Naive thymus-derived CD4-positive, alpha-beta T cell (primary cell): ENCODE measurements at regions of chr1 and their contacts with region 1.

Region 1: DNA sequence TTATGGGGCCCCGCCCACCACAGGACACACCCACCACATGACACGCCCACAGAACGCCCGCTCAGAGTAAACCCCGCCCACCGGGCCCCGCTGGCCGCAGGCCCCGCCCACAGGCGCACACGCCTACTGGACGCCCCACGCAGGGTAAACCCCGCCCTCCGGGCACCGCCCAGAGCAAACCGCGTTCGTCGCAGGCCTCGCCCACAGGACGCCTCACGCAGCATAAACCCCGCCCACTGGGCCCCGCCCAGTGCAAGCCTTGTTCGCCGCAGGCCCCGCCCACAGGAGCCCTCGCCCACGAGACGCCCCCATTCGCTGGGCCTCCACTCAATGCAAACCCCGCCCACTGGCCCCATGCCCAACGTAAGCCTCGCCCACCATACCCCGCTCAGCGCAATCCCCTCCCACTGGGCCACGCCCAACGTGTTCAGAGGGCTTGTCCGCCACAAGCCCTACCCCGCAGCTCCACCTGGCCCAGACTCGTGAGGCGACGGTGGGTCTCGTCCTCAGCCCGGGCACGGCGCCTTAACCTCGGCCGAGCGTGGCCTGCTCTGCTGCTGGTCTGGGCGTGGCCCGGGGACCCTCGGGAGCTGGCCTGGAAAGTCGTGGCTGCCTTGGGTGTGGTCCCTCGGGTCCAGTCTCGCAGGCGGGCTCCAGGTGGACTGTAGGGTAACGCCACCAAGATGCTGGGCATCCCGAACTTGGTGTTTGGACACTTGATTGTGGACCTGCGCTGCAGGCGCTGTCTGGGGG is 401 bp upstream of the TMEM52 start:
- DNase-seq: peak; percentile 99 to 100 (median 100)
- ATAC-seq: peak; percentile 95
- H3K4me3 ChIP-seq: peak overlapping the region; percentile 61
- H3K4me3 Mint-ChIP-seq: peak overlapping the region; percentile 52 to 79 (median 68)
- H3K27ac ChIP-seq: peak overlapping the region; percentile 58
- H3K27ac Mint-ChIP-seq: peak overlapping the region in 8 of 9 donors; percentile 51 to 89 (median 82)
- H3K4me1 ChIP-seq: peaks cover 7 to 16% of the 10 kb centered on the region in 2 donors
- H3K4me1 Mint-ChIP-seq: peaks cover 0 to 7% (median 0%) of the 10 kb centered on the region in 7 donors
- H3K27me3 ChIP-seq: no peaks in the 10 kb centered on the region
- H3K27me3 Mint-ChIP-seq: peaks cover 0 to 4% (median 0%) of the 10 kb centered on the region in 5 donors

Region 2: GRCh38 chr1:1876335-1876930 is 43.0 kb before region 1 on chr1:
- CTCF ChIA-PET with region 1: no interaction called
- POLR2A ChIA-PET with region 1: no interaction called
- intact Hi-C with region 1: no loop called
- DNase-seq: no peak
- ATAC-seq: no peak
- H3K4me3 ChIP-seq: no peak overlapping the region
- H3K4me3 Mint-ChIP-seq: peak overlapping the region in 9 of 10 donors; percentile 5 to 78 (median 53)
- H3K27ac ChIP-seq: peak overlapping the region; percentile 10
- H3K27ac Mint-ChIP-seq: peak overlapping the region; percentile 32 to 74 (median 48)
- H3K4me1 ChIP-seq: peaks cover 39 to 61% of the 10 kb centered on the region in 2 donors
- H3K4me1 Mint-ChIP-seq: peaks cover 54 to 88% (median 80%) of the 10 kb centered on the region in 7 donors
- H3K27me3 ChIP-seq: no peaks in the 10 kb centered on the region
- H3K27me3 Mint-ChIP-seq: no peaks in the 10 kb centered on the region

Region 3: DNA sequence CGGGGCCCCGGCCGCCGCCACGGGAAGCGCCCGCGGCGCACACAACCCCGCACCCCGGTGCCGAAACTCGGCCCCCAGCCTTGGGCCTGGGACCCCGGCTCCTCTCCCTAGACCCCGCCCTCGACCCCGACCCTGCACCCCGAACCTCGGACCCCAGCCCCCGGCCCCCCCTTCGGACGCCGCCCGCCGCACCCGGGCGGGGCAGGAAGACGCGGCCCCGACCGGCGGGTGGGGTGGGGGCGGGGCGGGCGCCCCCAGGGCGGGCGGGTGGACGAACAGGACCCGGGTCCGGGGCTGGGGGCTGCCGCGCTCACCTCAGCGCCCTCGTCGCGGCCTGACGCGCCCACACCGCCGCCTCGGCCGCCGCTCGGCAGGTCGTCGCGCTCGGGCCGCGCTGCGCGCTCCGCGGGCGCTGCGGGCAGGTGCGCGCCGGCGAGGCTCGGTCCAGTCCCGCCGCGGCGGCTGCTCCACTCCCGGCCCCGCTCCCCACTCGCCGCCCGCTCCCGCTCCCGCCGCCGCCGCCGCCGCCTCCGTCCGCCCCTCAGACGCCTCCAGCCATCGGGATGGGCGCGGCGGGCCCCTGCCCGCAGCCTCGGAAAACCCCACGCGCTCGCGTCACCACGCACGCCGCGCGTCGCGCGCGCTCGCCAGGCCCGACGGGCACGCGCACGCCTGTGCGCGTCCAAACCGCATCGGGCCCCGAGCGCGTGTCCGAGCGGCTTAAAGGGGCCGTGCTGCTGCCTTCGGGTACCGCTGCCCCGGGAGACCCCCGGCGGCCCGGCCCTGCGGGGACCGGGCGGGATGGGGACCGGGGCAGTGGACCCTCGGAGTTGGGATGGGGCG is 28.8 kb before region 1 on chr1 and contains the start of gene GNB1:
- CTCF ChIA-PET with region 1: no interaction called
- POLR2A ChIA-PET with region 1: no interaction called
- intact Hi-C with region 1: loop called (anchors 1 kb)
- DNase-seq: peak; percentile 80 to 96 (median 93)
- ATAC-seq: peak; percentile 88
- H3K4me3 ChIP-seq: peak within 1 kb of the TSS; percentile 64
- H3K4me3 Mint-ChIP-seq: peak within 1 kb of the TSS; percentile 83 to 100 (median 90)
- H3K27ac ChIP-seq: peak within 1 kb of the TSS; percentile 96
- H3K27ac Mint-ChIP-seq: peak within 1 kb of the TSS; percentile 89 to 98 (median 95)
- H3K4me1 ChIP-seq: peaks cover 36 to 52% of the 10 kb centered on the region in 2 donors
- H3K4me1 Mint-ChIP-seq: peaks cover 41 to 76% (median 61%) of the 10 kb centered on the region in 7 donors
- H3K27me3 ChIP-seq: no peaks in the 10 kb centered on the region
- H3K27me3 Mint-ChIP-seq: peaks cover 0 to under 1% (median 0%) of the 10 kb centered on the region in 5 donors
- total RNA-seq, gene GNB1: 170 to 358 (median 246) TPM

Region 4: GRCh38 chr1:2049718-2050427 is 130.4 kb after region 1 on chr1 and contains the start of gene PRKCZ:
- CTCF ChIA-PET with region 1: no interaction called
- POLR2A ChIA-PET with region 1: no interaction called
- intact Hi-C with region 1: loop called in 1 of 2 experiments (anchors 1 kb)
- DNase-seq: peak; percentile 76 to 96 (median 92)
- ATAC-seq: peak; percentile 99
- H3K4me3 ChIP-seq: peak within 1 kb of the TSS; percentile 73
- H3K4me3 Mint-ChIP-seq: peak within 1 kb of the TSS; percentile 64 to 89 (median 80)
- H3K27ac ChIP-seq: peak within 1 kb of the TSS; percentile 70
- H3K27ac Mint-ChIP-seq: peak within 1 kb of the TSS in 6 of 9 donors; percentile 5 to 82 (median 50)
- H3K4me1 ChIP-seq: peaks cover 7 to 14% of the 10 kb centered on the region in 2 donors
- H3K4me1 Mint-ChIP-seq: peaks cover 10 to 35% (median 22%) of the 10 kb centered on the region in 7 donors
- H3K27me3 ChIP-seq: no peaks in the 10 kb centered on the region
- H3K27me3 Mint-ChIP-seq: peaks cover 0 to 45% (median 5%) of the 10 kb centered on the region in 5 donors
- total RNA-seq, gene PRKCZ: 3.6 to 29.6 (median 24.5) TPM

Region 5: DNA sequence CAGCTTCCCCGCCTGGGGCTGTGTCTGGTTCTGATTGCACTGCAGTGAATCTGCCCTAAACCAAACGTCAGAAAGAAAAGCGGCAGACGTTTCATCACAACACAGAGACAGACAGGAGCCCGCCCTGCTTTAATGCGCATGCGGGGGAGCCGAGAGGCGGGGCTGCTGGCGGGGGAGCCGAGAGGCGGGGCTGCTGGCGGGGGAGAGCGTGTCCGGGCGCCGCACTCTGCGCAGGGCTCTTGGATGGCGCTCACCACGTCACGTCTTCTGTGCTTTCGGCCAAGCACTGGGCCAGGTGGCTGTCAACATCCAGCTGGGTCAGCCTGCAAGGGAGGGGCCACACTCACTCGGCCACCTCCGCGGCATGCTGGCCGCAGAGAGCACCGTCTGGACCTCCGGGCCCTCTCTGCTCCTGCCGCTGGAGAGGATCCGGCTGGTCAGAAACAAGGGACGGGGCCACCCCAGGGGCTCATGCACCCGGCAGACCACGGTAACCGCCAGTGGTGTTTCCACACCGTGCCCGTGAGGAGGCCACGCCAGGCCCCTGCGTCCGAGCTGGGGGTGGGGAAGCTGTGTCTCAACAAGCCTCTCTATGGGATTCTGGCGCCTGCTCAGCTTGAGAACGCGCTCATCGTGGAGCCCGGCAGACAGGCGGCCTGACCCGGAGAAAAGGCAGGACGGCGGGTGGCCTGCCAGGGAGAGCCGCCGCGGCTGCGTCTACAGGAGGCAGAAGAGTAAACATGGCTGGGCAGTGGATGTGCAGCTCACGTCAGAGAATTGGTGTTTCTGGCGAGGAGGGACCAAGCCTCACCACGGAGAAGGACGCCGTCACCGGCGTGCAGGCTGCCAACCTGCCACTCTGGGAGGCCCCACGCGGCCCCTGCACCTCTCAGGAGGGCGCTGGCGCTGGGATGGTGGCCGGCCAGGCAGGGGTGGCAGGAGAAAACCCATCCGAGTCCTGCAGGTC is 270.3 kb after region 1 on chr1:
- CTCF ChIA-PET with region 1: no interaction called
- POLR2A ChIA-PET with region 1: no interaction called
- intact Hi-C with region 1: loop called in 1 of 2 experiments (anchors 1 kb)
- DNase-seq: peak; percentile 78 to 95 (median 91)
- ATAC-seq: peak; percentile 95
- H3K4me3 ChIP-seq: peak overlapping the region; percentile 80
- H3K4me3 Mint-ChIP-seq: peak overlapping the region; percentile 66 to 86 (median 80)
- H3K27ac ChIP-seq: peak overlapping the region; percentile 82
- H3K27ac Mint-ChIP-seq: peak overlapping the region; percentile 68 to 99 (median 95)
- H3K4me1 ChIP-seq: peaks cover 6 to 9% of the 10 kb centered on the region in 2 donors
- H3K4me1 Mint-ChIP-seq: peaks cover 0 to 23% (median 11%) of the 10 kb centered on the region in 7 donors
- H3K27me3 ChIP-seq: no peaks in the 10 kb centered on the region
- H3K27me3 Mint-ChIP-seq: no peaks in the 10 kb centered on the region